GM10248 (cell line): ENCODE measurements at regions of chr6 and their contacts with region 1.

Region 1: GRCh38 chr6:141963516-141964285 is 169.0 kb upstream of the GJE1 start:
- DNase-seq: no peak
- CTCF ChIP-seq: no peak

Region 2: GRCh38 chr6:141953072-141953471 is 10.6 kb before region 1 on chr6:
- CTCF ChIA-PET with region 1: interaction called, 10 read pairs
- POLR2A ChIA-PET with region 1: no interaction called
- DNase-seq: no peak
- CTCF ChIP-seq: no peak

Region 3: GRCh38 chr6:141996823-141997222 is 33.1 kb after region 1 on chr6:
- CTCF ChIA-PET with region 1: no interaction called
- POLR2A ChIA-PET with region 1: no interaction called
- DNase-seq: no peak
- CTCF ChIP-seq: no peak